ENCODE measurements at regions of chr12 and their contacts with region 1.

Region 1: DNA sequence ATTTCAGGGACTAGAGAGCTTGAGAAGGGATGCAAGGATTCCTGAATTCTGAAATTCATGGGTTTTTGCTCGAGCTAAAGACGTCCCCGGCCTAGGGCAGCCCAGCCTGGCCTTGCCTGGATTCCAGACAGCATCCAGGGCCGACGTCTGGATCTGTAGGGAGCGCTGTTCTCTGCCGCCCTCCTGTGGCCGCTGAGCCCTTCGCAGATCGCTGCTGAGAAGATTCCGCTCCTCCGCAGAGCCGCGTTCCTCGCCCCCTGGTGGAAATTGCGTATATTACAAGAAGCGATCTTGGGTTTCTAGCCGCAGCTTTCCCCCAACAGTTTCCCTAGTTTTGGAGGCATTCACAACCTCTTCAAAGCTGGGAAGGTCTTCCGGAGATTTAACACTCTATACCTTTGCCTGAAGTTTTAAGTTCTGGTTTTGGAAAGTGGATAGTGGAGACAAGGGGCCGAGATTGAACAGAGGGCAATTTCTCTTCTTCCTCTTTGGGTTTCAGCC is 5.1 kb downstream of the CISTR start:
- DNase-seq: peak; percentile 74 to 93 (median 88)
- ATAC-seq: peak; percentile 85
- H3K4me3 ChIP-seq: no peak overlapping the region
- H3K4me3 Mint-ChIP-seq: peak overlapping the region; percentile 40
- H3K27ac ChIP-seq: no peak overlapping the region
- H3K27ac Mint-ChIP-seq: no peak overlapping the region
- H3K4me1 ChIP-seq: peaks cover 25% of the 10 kb centered on the region
- H3K4me1 Mint-ChIP-seq: peaks cover 17% of the 10 kb centered on the region
- H3K27me3 ChIP-seq: peaks cover 20 to 24% of the 10 kb centered on the region in 2 experiments
- H3K27me3 Mint-ChIP-seq: peaks cover 44% of the 10 kb centered on the region
- CTCF ChIP-seq: peak; percentile 100

Region 2: DNA sequence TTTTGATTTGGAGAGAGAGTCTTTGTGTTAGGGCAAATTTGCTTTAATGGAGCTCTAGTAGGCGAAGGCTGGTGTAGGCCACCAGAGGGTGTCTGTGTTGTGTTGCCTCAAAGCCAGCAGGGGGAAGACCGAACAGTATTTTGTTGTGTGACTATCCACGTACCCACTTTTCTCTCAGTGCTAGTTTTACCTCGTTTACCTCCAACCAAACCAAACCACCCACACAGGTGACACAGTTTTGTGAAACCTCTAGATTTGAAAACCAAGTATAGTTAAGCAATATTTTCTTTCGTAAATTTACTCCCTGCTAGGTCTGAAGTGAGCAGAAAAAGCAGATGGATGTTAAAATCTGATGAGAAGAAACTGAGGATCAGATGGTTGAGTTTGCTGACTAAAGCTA is 203.1 kb before region 1 on chr12:
- CTCF ChIA-PET with region 1: interaction called, 9 read pairs
- POLR2A ChIA-PET with region 1: no interaction called
- intact Hi-C with region 1: loop called (anchors 2 kb)
- DNase-seq: peak; percentile 4 to 75 (median 34)
- ATAC-seq: peak; percentile 97
- H3K4me3 ChIP-seq: no peak overlapping the region
- H3K4me3 Mint-ChIP-seq: no peak overlapping the region
- H3K27ac ChIP-seq: no peak overlapping the region
- H3K27ac Mint-ChIP-seq: peak overlapping the region; percentile 76
- H3K4me1 ChIP-seq: peaks cover 6% of the 10 kb centered on the region
- H3K4me1 Mint-ChIP-seq: peaks cover 14% of the 10 kb centered on the region
- H3K27me3 ChIP-seq: no peaks in the 10 kb centered on the region
- H3K27me3 Mint-ChIP-seq: no peaks in the 10 kb centered on the region
- CTCF ChIP-seq: peak; percentile 68

Region 3: DNA sequence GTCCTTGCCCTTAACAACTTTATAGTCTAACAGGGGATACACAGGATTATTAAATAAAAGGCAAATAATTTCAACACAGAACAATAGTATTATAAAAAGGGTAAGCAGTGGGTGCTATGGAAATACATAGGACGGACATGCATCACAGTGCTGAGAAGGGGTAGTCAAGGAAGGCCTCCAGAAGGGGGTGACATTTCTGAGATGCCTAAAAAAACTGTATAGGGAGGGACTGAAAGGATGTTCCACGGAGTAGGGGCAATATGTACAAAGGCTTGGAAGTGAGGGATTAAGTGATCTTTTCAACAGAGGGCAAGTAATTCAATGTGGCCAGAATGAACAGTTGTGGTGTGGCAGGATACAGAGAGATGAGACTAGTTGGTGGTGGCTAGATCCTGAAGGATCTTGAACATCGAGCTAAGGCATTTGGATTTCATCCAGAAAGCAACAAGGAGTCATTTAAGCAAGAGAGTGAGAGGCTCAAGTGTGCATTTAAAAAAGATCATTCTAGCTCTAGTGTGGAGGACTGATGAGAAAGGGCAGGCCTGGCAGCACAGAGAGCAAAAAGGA is 61.9 kb before region 1 on chr12:
- CTCF ChIA-PET with region 1: interaction called, 288 read pairs
- POLR2A ChIA-PET with region 1: interaction called, 3 read pairs
- intact Hi-C with region 1: no loop called
- DNase-seq: no peak
- ATAC-seq: no peak
- H3K4me3 ChIP-seq: no peak overlapping the region
- H3K4me3 Mint-ChIP-seq: no peak overlapping the region
- H3K27ac ChIP-seq: no peak overlapping the region
- H3K27ac Mint-ChIP-seq: no peak overlapping the region
- H3K4me1 ChIP-seq: no peaks in the 10 kb centered on the region
- H3K4me1 Mint-ChIP-seq: no peaks in the 10 kb centered on the region
- H3K27me3 ChIP-seq: no peaks in the 10 kb centered on the region
- H3K27me3 Mint-ChIP-seq: peaks cover 20% of the 10 kb centered on the region
- CTCF ChIP-seq: no peak

Region 4: DNA sequence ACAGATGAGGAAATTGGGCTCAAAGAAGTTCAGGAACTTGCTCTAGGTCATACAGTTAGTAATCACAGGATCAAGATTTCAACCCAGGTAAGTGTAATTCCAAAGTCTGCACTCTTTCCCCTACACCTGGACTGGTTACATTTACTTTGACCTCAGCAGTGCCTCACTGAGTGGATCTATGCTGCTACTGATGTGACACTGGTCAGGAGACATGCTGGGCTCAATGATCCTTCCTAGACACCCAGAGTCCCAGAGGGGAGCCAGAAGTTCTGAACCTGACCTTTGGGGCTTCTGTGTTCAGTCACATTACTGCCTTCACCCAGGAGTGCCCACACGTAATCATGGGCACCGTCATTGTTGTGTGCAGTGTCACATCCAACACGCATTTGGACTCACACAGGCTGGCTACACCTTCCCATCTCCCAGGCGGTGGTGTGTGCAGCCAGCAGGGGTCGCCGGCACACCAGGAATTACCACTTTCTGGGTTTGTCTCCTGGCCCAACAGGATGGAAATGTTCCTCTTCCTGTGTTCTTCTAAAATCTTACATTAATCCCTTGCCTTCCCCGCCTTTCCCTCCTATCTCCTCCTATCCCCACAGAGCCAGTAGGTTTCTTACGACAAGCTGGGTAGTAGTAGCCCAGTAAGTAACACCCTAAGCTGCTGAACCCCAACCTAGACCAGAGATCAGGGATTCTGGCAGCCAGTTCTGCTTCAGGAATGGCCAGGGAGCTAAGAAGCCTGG is 45.0 kb before region 1 on chr12:
- CTCF ChIA-PET with region 1: interaction called, 288 read pairs
- POLR2A ChIA-PET with region 1: interaction called, 6 read pairs
- intact Hi-C with region 1: loop called (anchors 1 kb)
- DNase-seq: peak; percentile 52 to 86 (median 77)
- ATAC-seq: peak; percentile 92
- H3K4me3 ChIP-seq: no peak overlapping the region
- H3K4me3 Mint-ChIP-seq: no peak overlapping the region
- H3K27ac ChIP-seq: no peak overlapping the region
- H3K27ac Mint-ChIP-seq: no peak overlapping the region
- H3K4me1 ChIP-seq: peaks cover 3% of the 10 kb centered on the region
- H3K4me1 Mint-ChIP-seq: peaks cover 5% of the 10 kb centered on the region
- H3K27me3 ChIP-seq: peaks cover 19 to 24% of the 10 kb centered on the region in 2 experiments
- H3K27me3 Mint-ChIP-seq: peaks cover 77% of the 10 kb centered on the region
- CTCF ChIP-seq: peak; percentile 83

Region 5: GRCh38 chr12:53719649-53720048 is 27.0 kb before region 1 on chr12:
- CTCF ChIA-PET with region 1: interaction called, 36 read pairs
- POLR2A ChIA-PET with region 1: interaction called, 3 read pairs
- intact Hi-C with region 1: no loop called
- DNase-seq: no peak
- ATAC-seq: no peak
- H3K4me3 ChIP-seq: no peak overlapping the region
- H3K4me3 Mint-ChIP-seq: no peak overlapping the region
- H3K27ac ChIP-seq: no peak overlapping the region
- H3K27ac Mint-ChIP-seq: no peak overlapping the region
- H3K4me1 ChIP-seq: no peaks in the 10 kb centered on the region
- H3K4me1 Mint-ChIP-seq: no peaks in the 10 kb centered on the region
- H3K27me3 ChIP-seq: no peaks in the 10 kb centered on the region
- H3K27me3 Mint-ChIP-seq: no peaks in the 10 kb centered on the region
- CTCF ChIP-seq: no peak

Region 6: DNA sequence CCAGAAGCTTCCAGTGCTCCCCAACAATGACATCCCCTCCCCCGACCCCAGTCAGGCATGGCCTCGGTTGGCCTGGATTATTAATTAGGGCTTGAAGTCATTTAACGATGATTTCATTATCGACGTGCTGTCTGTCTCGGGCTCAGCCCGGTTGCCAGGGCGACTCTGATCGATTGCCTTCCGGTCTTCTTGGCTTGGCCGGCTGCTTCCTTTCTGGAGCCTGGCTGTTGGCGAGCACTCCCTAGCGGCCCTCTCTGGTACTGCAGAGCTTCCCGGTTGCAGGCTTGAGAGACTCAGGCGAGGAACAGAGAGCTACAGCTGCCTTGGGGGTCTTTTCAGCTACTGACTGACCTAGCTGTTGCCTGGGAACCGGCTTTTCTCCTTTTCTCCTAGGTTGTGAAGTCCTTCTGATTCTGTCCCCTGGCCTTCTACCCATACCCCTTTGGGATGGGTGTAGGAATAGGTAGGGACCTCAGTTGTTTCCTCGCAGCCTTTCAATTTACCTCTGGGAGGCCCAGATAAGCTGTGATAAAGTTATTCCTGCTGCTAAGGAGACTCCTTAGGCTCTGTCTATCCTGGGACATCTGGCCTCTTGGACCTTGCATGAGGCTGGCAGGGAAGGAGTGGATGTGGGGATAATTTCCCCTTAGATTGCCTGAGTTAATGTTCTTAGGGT is 10.6 kb after region 1 on chr12:
- CTCF ChIA-PET with region 1: interaction called, 137 read pairs
- POLR2A ChIA-PET with region 1: interaction called, 7 read pairs
- intact Hi-C with region 1: no loop called
- DNase-seq: peak; percentile 67 to 86 (median 80)
- ATAC-seq: peak; percentile 97
- H3K4me3 ChIP-seq: peak overlapping the region in 1 of 2 experiments; percentile 4
- H3K4me3 Mint-ChIP-seq: peak overlapping the region; percentile 60
- H3K27ac ChIP-seq: no peak overlapping the region
- H3K27ac Mint-ChIP-seq: no peak overlapping the region
- H3K4me1 ChIP-seq: peaks cover 7% of the 10 kb centered on the region
- H3K4me1 Mint-ChIP-seq: peaks cover 12% of the 10 kb centered on the region
- H3K27me3 ChIP-seq: peaks cover 11 to 14% of the 10 kb centered on the region in 2 experiments
- H3K27me3 Mint-ChIP-seq: peaks cover 37% of the 10 kb centered on the region
- CTCF ChIP-seq: peak; percentile 87

Measured in CD8-positive, alpha-beta T cell (primary cell).